Gastrocnemius medialis (tissue), 4 donors: ENCODE measurements at regions of chr6 and their contacts with region 1.

Region 1: GRCh38 chr6:52664186-52664990 is 6.5 kb upstream of the TMEM14A start:
- DNase-seq: peak; percentile 66 to 87
- ATAC-seq: peak; percentile 92 to 98
- H3K4me3 ChIP-seq: peak overlapping the region; percentile 66 to 76 (median 67)
- H3K27ac ChIP-seq: peak overlapping the region; percentile 51 to 73 (median 54)
- H3K4me1 ChIP-seq: peaks cover 0 to 4% of the 10 kb centered on the region in 2 donors
- H3K27me3 ChIP-seq: no peaks in the 10 kb centered on the region
- CTCF ChIP-seq: no peak
- POLR2A ChIP-seq: peak; percentile 49 to 62

Region 2: GRCh38 chr6:52284460-52285176 is 379.8 kb before region 1 on chr6 and contains the start of gene MCM3:
- in situ Hi-C with region 1: loop called in 3 of 4 experiments (anchors 25 kb)
- intact Hi-C with region 1: loop called (anchors 1 kb)
- DNase-seq: peak; percentile 96 to 98
- ATAC-seq: peak; percentile 100
- H3K4me3 ChIP-seq: peak within 1 kb of the TSS; percentile 75 to 91 (median 82)
- H3K27ac ChIP-seq: peak within 1 kb of the TSS; percentile 55 to 76 (median 70)
- H3K4me1 ChIP-seq: peaks cover 15 to 18% of the 10 kb centered on the region in 2 donors
- H3K27me3 ChIP-seq: no peaks in the 10 kb centered on the region
- CTCF ChIP-seq: peak in 1 of 5 experiments; percentile 23
- POLR2A ChIP-seq: no peak
- total RNA-seq, gene MCM3: 9.1 to 12.9 (median 9.8) TPM

Region 3: GRCh38 chr6:52598123-52598823 is 66.1 kb before region 1 on chr6:
- in situ Hi-C with region 1: loop called in 2 of 4 experiments (anchors 10 kb)
- intact Hi-C with region 1: loop called (anchors 5 kb)
- DNase-seq: peak in 1 of 2 donors; percentile 40
- ATAC-seq: peak; percentile 39 to 79
- H3K4me3 ChIP-seq: peak overlapping the region in 3 of 4 donors; percentile 22 to 42 (median 35)
- H3K27ac ChIP-seq: no peak overlapping the region
- H3K4me1 ChIP-seq: peaks cover 0 to 15% of the 10 kb centered on the region in 2 donors
- H3K27me3 ChIP-seq: no peaks in the 10 kb centered on the region
- CTCF ChIP-seq: peak; percentile 55 to 74 (median 70)
- POLR2A ChIP-seq: no peak

Region 4: GRCh38 chr6:52647199-52647598 is 17.2 kb before region 1 on chr6:
- in situ Hi-C with region 1: no loop called
- intact Hi-C with region 1: loop called (anchors 1 kb)
- DNase-seq: no peak
- ATAC-seq: no peak
- H3K4me3 ChIP-seq: no peak overlapping the region
- H3K27ac ChIP-seq: no peak overlapping the region
- H3K4me1 ChIP-seq: no peaks in the 10 kb centered on the region
- H3K27me3 ChIP-seq: no peaks in the 10 kb centered on the region
- CTCF ChIP-seq: no peak
- POLR2A ChIP-seq: no peak

Region 5: DNA sequence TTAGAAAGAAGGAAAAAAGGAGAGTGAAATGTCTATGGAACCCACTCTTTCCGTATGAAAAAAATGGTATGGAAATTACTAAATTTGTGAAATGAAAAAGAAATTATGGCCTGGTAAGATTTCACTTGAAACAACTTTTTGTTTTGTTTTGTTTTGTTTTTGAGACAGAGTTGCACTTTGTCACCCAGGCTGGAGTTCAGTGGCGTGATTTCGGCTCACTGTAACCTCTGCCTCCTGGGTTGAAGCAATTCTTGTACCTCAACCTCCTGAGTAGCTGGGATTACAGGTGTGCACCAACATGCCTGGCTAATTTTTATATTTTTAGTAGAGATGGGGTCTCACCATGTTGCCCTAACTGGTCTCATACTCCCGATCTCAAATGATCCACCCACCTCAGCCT is 194.0 kb after region 1 on chr6:
- in situ Hi-C with region 1: no loop called
- intact Hi-C with region 1: no loop called
- DNase-seq: no peak
- ATAC-seq: no peak
- H3K4me3 ChIP-seq: no peak overlapping the region
- H3K27ac ChIP-seq: no peak overlapping the region
- H3K4me1 ChIP-seq: no peaks in the 10 kb centered on the region
- H3K27me3 ChIP-seq: peaks cover 0 to 2% (median 0%) of the 10 kb centered on the region in 3 donors
- CTCF ChIP-seq: no peak
- POLR2A ChIP-seq: no peak